Activated CD8-positive, alpha-beta T cell treated with anti-CD3 and anti-CD28 coated beads for 36 hours (primary cell): ENCODE measurements at regions of chr12 and their contacts with region 1.

Region 1: DNA sequence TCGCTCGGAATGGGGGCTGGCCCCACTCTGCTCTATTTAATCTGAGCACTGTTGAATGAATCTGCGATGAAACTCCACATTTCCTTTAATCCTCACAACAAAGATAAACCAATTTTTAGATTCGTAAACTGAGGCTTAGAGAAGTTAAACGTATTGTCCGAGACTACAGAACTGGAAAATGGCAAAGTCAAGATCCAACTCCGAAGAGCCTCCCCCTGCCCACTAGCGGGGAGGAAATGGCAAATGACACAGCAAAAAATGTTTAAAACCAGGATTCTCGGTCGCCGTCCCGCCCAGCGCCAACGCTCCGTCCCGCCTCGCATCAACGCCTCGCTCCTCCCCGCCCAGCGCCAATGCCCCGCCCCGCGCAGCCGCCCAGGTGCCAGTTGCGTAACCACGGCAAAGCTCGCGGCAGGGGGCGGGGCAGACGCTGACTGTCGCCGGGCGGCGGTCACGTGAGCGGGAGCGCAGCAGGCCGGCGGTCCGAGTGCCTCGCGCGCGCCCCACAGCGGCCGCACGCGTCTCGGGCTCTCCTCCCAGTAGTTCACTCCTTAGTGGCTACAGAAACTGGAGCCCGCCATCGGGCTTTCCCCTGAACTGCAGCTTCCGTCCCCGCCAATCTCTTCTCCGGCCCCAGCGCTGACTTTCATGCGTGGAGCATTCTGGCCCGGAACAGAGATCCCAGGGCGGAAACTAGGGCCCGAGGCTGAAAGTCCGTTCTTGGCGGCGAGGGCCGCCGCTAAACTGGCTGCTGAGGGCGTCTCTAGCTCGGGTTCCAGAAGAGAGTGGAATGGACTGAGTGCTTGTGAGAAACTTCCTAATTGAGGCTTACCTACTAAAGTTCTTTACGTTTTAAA is 13.6 kb upstream of the LRRC23 start:
- DNase-seq: peak; percentile 99
- ATAC-seq: peak; percentile 95
- H3K4me3 Mint-ChIP-seq: peak overlapping the region; percentile 73
- H3K27ac Mint-ChIP-seq: peak overlapping the region; percentile 91
- H3K4me1 Mint-ChIP-seq: peaks cover 16% of the 10 kb centered on the region
- H3K27me3 Mint-ChIP-seq: no peaks in the 10 kb centered on the region
- CTCF ChIP-seq: peak; percentile 81

Region 2: GRCh38 chr12:6335451-6336078 is 555.5 kb before region 1 on chr12:
- CTCF ChIA-PET with region 1: no interaction called
- POLR2A ChIA-PET with region 1: no interaction called
- intact Hi-C with region 1: no loop called
- DNase-seq: peak; percentile 96
- ATAC-seq: peak; percentile 71
- H3K4me3 Mint-ChIP-seq: no peak overlapping the region
- H3K27ac Mint-ChIP-seq: no peak overlapping the region
- H3K4me1 Mint-ChIP-seq: peaks cover 52% of the 10 kb centered on the region
- H3K27me3 Mint-ChIP-seq: no peaks in the 10 kb centered on the region
- CTCF ChIP-seq: peak; percentile 48

Region 3: DNA sequence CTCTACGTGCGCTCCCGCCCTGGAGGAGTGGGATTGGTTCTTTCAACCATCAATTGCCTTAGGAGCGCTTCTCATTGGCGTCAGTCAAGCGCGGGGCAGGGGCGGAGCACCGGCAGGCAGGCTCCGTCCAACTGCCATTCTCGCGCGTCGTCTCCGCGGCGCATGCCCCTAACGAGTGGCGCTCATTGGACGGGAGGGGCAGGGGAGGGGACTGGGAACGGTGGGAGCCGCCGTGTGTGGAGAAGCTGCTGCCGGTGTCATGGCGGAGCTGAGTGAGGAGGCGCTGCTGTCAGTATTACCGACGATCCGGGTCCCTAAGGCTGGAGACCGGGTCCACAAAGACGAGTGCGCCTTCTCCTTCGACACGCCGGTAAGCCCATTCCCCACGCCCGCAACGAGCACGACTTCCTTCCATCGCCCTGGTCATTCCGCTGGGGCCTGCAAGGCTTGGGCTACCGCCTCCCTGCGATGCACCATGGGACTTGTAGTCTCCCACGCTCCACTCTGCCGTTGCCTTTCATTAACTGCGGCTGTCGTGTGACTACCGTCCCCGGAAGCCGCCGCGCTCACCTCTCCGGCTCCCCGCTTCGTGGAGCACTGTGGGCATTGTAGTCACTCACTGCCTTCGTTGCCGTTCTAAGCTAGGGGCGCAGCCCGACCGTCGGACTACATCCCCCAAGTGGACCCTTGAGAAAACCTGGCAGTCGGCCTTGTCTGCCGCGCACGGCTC is 38.9 kb before region 1 on chr12 and contains the start of gene USP5:
- CTCF ChIA-PET with region 1: interaction called, 26 read pairs
- POLR2A ChIA-PET with region 1: interaction called, 4 read pairs
- intact Hi-C with region 1: no loop called
- DNase-seq: peak; percentile 99
- ATAC-seq: peak; percentile 79
- H3K4me3 Mint-ChIP-seq: peak within 1 kb of the TSS; percentile 86
- H3K27ac Mint-ChIP-seq: peak within 1 kb of the TSS; percentile 98
- H3K4me1 Mint-ChIP-seq: peaks cover 29% of the 10 kb centered on the region
- H3K27me3 Mint-ChIP-seq: no peaks in the 10 kb centered on the region
- CTCF ChIP-seq: no peak
- total RNA-seq, gene USP5: 109 to 112 TPM

Region 4: DNA sequence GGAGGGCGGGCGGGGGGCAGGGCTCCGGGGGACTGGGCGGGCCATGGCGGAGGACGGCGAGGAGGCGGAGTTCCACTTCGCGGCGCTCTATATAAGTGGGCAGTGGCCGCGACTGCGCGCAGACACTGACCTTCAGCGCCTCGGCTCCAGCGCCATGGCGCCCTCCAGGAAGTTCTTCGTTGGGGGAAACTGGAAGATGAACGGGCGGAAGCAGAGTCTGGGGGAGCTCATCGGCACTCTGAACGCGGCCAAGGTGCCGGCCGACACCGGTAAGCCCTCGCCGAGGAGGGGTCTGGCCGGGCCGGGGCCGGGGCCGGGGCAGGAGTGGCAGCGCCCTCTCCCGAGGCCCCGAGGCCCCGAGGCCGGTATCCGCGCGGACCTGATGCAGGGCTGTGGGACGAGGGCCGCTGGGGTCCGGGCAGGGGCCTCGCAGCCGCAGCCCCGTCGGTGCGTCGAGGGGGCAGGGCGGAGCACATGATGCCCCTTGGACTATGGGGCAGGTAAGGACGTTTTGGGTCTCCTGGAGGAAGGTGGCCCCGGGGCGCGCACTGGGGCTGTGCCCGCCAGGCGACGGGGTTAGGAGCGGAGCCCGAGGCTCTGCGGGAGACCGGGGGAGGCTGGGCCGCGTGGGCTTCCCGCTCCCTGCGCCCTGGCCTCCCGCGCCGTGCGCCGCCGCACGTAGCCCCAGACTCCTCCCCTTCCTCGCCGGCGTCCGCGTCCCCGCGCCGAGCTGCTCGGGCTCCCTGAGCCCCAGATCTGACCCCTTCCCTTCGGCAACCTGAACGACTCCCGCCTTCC is 23.4 kb before region 1 on chr12 and contains the start of gene TPI1:
- CTCF ChIA-PET with region 1: interaction called, 41 read pairs
- POLR2A ChIA-PET with region 1: interaction called, 79 read pairs
- intact Hi-C with region 1: no loop called
- DNase-seq: peak; percentile 84
- ATAC-seq: peak; percentile 74
- H3K4me3 Mint-ChIP-seq: peak within 1 kb of the TSS; percentile 91
- H3K27ac Mint-ChIP-seq: peak within 1 kb of the TSS; percentile 97
- H3K4me1 Mint-ChIP-seq: peaks cover 55% of the 10 kb centered on the region
- H3K27me3 Mint-ChIP-seq: no peaks in the 10 kb centered on the region
- CTCF ChIP-seq: no peak
- total RNA-seq, gene TPI1: 1,714 to 1,776 TPM

Region 5: DNA sequence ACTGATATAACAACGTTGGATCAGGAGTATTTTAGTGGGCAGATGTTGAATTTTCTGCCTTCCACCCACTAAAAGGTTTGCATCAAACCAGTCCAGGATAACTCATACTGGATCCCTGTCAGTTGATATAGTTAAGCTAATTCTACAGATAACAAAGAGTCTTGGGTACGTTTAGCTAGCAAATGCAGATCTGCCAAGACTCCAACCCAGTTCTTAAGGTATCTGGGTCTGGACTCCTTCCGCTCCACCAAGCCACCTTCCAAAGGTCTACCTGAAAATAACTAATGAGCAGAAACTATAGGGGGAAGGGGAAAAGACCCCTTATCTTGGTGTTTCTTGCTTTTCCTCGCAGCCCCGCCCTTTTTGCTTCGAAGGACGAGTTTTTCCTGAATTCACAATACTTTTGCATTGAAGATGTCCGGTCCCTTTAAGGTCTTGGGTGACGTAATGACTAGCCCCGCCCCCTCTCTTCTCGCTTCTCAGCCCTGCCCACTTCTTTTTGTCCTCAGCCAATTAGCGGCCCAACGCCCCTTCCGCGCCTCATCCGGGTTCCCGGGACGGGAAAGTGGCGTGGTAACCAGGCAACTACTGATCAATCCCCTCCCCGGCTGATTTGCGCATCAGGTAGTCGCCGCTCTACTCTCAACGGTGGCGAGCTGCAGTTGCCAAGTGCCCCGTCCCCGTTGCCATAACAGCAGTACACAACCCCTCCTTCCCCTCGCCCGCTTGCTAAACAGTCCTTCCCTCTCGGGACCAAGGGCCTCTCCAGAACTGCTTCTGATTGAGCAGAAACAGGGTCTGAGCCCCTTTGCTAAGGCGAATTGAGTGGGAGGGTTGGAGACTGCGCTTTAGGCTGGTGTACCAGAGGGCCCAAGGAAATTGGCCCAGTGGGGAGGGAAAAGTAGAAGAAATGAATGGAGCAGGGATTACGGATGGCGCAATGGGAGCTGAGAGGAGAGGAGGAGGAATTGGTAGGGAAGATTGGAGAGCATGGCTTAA is 13.6 kb after region 1 on chr12 and contains the start of gene LRRC23:
- CTCF ChIA-PET with region 1: interaction called, 30 read pairs
- POLR2A ChIA-PET with region 1: interaction called, 11 read pairs
- intact Hi-C with region 1: no loop called
- DNase-seq: peak; percentile 100
- ATAC-seq: peak; percentile 96
- H3K4me3 Mint-ChIP-seq: no peak within 1 kb of the TSS
- H3K27ac Mint-ChIP-seq: no peak within 1 kb of the TSS
- H3K4me1 Mint-ChIP-seq: peaks cover 10% of the 10 kb centered on the region
- H3K27me3 Mint-ChIP-seq: no peaks in the 10 kb centered on the region
- CTCF ChIP-seq: no peak
- total RNA-seq, gene LRRC23: 4.6 to 5.3 TPM

Region 6: DNA sequence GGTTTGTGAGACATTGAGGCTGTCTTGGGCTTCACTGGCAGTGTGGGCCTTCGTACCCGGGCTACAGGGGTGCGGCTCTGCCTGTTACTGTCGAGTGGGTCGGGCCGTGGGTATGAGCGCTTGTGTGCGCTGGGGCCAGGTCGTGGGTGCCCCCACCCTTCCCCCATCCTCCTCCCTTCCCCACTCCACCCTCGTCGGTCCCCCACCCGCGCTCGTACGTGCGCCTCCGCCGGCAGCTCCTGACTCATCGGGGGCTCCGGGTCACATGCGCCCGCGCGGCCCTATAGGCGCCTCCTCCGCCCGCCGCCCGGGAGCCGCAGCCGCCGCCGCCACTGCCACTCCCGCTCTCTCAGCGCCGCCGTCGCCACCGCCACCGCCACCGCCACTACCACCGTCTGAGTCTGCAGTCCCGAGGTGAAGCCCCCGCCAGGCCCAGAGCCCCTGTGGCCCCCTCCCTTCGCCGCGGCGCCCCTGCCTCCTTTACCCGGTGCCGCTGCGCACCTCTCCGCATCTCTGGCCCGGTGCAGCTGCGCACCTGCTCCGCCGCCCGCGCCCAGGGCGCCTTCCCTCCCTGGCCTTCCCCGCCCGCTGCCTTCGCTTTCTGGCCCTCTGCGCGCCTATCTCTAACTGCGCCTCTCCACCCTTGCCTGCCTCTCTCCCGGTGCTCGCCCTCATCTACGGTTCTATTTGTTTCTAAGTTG is 23.4 kb after region 1 on chr12 and contains the start of gene ENO2:
- CTCF ChIA-PET with region 1: interaction called, 27 read pairs
- POLR2A ChIA-PET with region 1: interaction called, 6 read pairs
- intact Hi-C with region 1: no loop called
- DNase-seq: peak; percentile 88
- ATAC-seq: peak; percentile 91
- H3K4me3 Mint-ChIP-seq: peak within 1 kb of the TSS; percentile 95
- H3K27ac Mint-ChIP-seq: peak within 1 kb of the TSS; percentile 90
- H3K4me1 Mint-ChIP-seq: peaks cover 35% of the 10 kb centered on the region
- H3K27me3 Mint-ChIP-seq: no peaks in the 10 kb centered on the region
- CTCF ChIP-seq: no peak
- total RNA-seq, gene ENO2: 315 to 330 TPM

Region 7: DNA sequence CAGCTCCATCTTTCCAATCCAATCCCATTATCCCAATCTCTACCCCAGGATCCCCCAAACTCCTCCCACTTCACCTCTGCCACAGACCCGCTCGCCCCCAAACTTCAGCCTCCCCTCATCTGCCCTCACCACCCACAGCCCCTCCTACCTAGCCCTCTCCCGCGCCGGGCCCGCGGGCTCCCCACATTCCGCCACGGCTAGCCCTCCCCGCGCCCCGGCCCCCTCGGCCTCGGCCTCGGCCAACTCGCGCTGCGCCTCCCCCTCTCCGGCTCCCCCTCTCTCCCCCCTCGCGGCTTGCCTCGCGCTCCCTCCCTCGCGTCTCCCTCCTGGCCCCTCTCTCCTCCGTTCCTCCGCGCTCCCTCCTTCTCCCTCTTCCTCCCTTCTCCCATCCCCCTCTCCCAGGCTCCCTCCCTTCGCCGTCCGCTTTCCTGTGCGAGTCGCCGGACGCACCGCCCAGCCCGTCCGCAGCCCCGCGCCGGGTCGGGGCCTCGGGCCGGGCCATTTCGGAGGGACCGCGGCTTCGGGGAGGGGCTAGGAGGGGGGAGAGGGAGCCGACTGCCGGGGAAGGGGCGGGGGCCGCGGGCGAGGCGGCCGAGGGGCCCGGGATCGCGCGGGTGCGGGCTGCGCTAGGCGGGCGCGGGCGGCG is 36.5 kb after region 1 on chr12 and contains the start of gene ATN1:
- CTCF ChIA-PET with region 1: interaction called, 18 read pairs
- POLR2A ChIA-PET with region 1: interaction called, 5 read pairs
- intact Hi-C with region 1: no loop called
- DNase-seq: peak; percentile 55
- ATAC-seq: peak; percentile 32
- H3K4me3 Mint-ChIP-seq: peak within 1 kb of the TSS; percentile 78
- H3K27ac Mint-ChIP-seq: peak within 1 kb of the TSS; percentile 82
- H3K4me1 Mint-ChIP-seq: peaks cover 59% of the 10 kb centered on the region
- H3K27me3 Mint-ChIP-seq: no peaks in the 10 kb centered on the region
- CTCF ChIP-seq: no peak
- total RNA-seq, gene ATN1: 26.4 to 28.5 TPM

Region 8: GRCh38 chr12:7068240-7068993 is 177.4 kb after region 1 on chr12:
- CTCF ChIA-PET with region 1: no interaction called
- POLR2A ChIA-PET with region 1: no interaction called
- intact Hi-C with region 1: no loop called
- DNase-seq: no peak
- ATAC-seq: no peak
- H3K4me3 Mint-ChIP-seq: no peak overlapping the region
- H3K27ac Mint-ChIP-seq: no peak overlapping the region
- H3K4me1 Mint-ChIP-seq: no peaks in the 10 kb centered on the region
- H3K27me3 Mint-ChIP-seq: no peaks in the 10 kb centered on the region
- CTCF ChIP-seq: no peak